Activated CD4-positive, alpha-beta memory T cell treated with anti-CD3 and anti-CD28 coated beads for 36 hours (primary cell): ENCODE measurements at regions of chr1 and their contacts with region 1.

Region 1: DNA sequence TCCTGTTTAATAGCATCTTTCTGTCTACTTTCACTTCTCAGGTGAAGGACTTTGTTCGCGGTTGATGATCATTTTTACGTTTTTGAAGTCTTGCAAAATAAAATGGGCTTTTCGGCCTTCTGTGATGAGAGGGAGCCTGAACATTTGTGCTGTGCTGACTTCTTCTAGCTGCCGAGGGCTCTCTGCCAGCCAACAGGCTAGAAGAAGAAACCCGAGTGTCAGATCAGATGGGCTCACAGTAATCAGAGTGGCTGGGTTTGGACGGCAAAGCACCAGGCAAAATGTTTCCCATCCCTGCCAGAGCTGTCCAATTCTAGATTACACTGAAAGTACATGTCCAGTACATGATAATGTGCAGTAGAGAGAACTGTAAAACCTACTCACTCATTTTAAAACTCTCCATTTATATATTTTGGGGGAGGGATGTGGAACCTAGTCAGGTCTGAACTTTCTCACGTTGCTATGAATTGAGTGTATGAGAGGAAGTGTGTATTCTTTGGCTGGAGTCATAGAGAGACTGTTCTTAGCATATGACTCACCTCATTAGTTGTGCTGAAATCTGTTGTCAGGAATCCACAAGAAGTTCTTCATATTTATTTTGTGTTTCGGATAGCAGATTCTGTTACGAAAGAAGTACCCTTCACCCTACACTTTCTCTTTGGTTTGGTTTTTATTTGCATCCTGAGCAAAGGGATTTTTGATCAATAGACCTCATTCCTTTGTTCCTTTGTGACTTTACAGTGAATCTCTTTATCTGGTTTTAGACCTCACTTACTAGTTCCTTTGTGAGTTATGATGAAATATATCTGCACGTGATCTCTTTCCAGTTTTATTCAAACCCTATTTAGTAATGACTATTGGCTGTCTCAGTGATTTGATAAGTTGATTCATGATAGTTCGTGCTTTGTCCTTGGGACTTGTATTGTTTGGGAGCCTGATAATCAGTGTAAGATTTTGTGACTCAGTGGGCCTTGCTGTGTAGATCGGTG is 4.8 kb downstream of the ATP1A1 start:
- DNase-seq: peak; percentile 55
- H3K4me3 Mint-ChIP-seq: peak overlapping the region; percentile 69
- H3K27ac Mint-ChIP-seq: peak overlapping the region; percentile 83
- H3K4me1 Mint-ChIP-seq: peaks cover 77% of the 10 kb centered on the region
- H3K27me3 Mint-ChIP-seq: no peaks in the 10 kb centered on the region

Region 2: DNA sequence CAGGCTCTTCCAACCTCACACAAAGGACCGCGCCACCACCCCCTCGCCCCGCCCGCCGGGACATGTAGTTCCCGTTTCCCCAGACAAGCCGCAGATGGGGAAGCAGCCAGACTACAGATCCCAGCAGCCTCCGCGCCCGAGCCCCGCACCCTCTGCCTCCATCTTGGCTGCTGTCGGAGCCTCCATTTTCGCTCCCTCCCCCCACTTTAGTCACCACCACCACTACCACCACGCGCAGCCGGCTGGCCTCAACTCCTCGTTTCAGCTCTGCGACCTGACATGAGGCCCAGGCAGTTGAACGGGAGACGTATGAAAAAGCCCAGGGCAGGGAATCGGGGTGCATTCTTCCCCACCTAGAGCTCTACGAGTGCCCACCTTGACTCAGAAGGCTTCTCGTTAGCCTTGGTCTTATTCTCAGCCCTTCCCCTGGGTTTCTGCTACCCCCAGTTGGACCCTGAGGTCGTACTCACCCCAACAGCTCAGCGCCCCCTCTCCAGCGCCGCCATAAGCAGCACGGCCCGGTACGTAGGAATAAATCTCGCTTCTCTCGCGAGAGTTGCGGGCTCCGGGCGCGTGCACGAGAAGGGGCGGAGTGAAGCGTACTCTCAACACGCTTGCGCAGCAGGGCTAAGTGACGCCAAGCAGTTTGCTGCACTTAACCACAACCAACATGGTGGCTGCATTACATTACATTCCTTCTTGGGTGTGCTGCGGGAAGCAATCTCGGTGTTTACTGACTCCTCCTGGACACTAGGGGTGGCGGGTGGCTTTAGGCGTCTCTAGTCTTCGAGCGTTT is 1620.2 kb before region 1 on chr1 and contains the start of gene CSDE1:
- CTCF ChIA-PET with region 1: no interaction called
- POLR2A ChIA-PET with region 1: no interaction called
- intact Hi-C with region 1: loop called (anchors 2 kb)
- DNase-seq: peak; percentile 98
- H3K4me3 Mint-ChIP-seq: peak within 1 kb of the TSS; percentile 98
- H3K27ac Mint-ChIP-seq: peak within 1 kb of the TSS; percentile 100
- H3K4me1 Mint-ChIP-seq: peaks cover 47% of the 10 kb centered on the region
- H3K27me3 Mint-ChIP-seq: no peaks in the 10 kb centered on the region
- total RNA-seq, gene CSDE1: 452 to 464 TPM

Region 3: DNA sequence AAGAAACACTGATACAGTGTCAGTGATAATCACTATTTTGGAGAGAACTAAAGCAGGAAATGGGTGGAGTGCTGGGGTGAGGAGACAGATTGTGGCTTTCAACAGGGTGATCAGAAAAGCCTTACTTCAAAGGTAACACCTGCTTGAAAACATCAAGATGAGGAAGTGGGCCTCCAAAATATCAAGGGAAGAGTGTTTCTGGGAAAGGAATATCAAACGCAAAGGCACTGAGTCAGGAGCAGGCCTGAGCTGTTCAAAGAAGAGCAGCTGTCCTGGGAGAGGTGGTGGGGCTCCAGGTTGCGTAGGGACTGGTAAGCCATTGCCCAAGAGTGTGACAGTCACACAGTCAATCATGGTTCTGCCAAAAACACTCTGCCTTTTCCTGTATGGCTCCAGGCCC is 51.9 kb before region 1 on chr1:
- CTCF ChIA-PET with region 1: no interaction called
- POLR2A ChIA-PET with region 1: interaction called, 6 read pairs
- intact Hi-C with region 1: loop called (anchors 2 kb)
- DNase-seq: peak; percentile 56
- H3K4me3 Mint-ChIP-seq: peak overlapping the region; percentile 18
- H3K27ac Mint-ChIP-seq: peak overlapping the region; percentile 87
- H3K4me1 Mint-ChIP-seq: peaks cover 59% of the 10 kb centered on the region
- H3K27me3 Mint-ChIP-seq: no peaks in the 10 kb centered on the region

Region 4: DNA sequence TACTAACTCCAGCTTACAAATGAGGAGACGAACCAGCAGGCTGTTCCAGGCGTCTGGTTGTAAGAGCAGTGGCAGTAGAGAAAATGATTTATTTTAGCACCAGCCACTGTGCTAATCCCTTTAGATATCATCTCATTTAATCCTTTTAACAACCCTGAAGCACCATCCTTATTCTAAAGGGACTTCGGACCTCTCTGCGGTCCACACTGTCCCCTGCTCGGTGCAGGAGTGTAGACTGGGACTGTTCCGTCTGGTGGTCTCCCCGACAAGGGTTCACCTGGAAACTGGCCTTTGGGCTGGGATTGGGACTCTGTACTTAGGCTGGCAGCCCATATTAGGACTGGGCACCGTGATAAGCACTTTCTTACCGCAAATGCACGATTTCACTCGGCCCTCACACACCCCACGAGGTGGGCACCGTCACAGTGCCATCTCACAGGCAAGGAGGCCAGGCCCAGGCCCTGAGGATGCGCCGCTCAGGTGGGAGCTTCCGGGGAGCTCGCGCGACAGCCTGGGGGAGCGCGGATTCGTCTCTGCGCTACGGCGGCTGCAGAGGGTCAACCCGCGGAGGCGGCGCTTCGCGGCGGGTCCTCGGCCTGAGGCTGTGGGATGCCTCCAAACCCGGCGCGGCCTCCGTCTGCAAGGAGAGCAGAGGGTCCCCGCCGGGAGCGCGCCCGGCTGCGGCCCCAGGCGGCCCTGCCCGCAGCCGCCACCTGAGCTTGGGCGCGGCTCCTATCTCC is 40.4 kb after region 1 on chr1:
- CTCF ChIA-PET with region 1: interaction called, 3 read pairs
- POLR2A ChIA-PET with region 1: interaction called, 13 read pairs
- intact Hi-C with region 1: loop called (anchors 1 kb)
- DNase-seq: peak; percentile 91
- H3K4me3 Mint-ChIP-seq: peak overlapping the region; percentile 87
- H3K27ac Mint-ChIP-seq: peak overlapping the region; percentile 75
- H3K4me1 Mint-ChIP-seq: peaks cover 32% of the 10 kb centered on the region
- H3K27me3 Mint-ChIP-seq: no peaks in the 10 kb centered on the region

Region 5: GRCh38 chr1:116504308-116505156 is 126.7 kb after region 1 on chr1:
- CTCF ChIA-PET with region 1: interaction called, 6 read pairs
- POLR2A ChIA-PET with region 1: interaction called, 3 read pairs
- intact Hi-C with region 1: loop called (anchors 1 kb)
- DNase-seq: peak; percentile 92
- H3K4me3 Mint-ChIP-seq: peak overlapping the region; percentile 38
- H3K27ac Mint-ChIP-seq: peak overlapping the region; percentile 97
- H3K4me1 Mint-ChIP-seq: peaks cover 65% of the 10 kb centered on the region
- H3K27me3 Mint-ChIP-seq: no peaks in the 10 kb centered on the region

Region 6: DNA sequence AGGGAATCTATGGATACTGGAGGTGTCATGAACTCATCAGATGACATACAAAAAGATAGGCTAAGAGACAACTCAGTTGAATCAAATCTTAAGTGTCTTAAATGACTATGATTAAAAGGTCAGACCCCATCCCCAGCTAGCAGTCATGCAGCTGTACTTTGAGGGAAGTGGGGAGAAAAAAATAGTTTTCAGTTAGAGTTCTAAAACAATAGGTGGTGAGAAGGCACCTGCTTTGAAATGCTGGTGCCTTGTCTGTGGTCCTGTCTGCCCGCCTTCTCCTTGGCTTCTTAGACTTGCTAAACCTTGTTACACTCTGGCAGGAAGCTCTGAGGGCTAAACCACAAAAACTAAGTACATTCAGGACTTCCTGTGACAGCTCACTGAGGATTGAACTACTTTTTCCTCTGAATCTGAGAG is 391.7 kb after region 1 on chr1:
- CTCF ChIA-PET with region 1: no interaction called
- POLR2A ChIA-PET with region 1: interaction called, 3 read pairs
- intact Hi-C with region 1: loop called (anchors 5 kb)
- DNase-seq: peak; percentile 85
- H3K4me3 Mint-ChIP-seq: peak overlapping the region; percentile 99
- H3K27ac Mint-ChIP-seq: peak overlapping the region; percentile 99
- H3K4me1 Mint-ChIP-seq: peaks cover 95% of the 10 kb centered on the region
- H3K27me3 Mint-ChIP-seq: peaks cover 2% of the 10 kb centered on the region